B cell (primary cell): ENCODE measurements at regions of chr20 and their contacts with region 1.

Region 1: GRCh38 chr20:32535953-32536823 is 48.9 kb downstream of the NOL4L start:
- DNase-seq: peak; percentile 91
- ATAC-seq: peak; percentile 74
- H3K4me3 ChIP-seq: peak overlapping the region in 4 of 5 experiments; percentile 47 to 69 (median 59)
- H3K4me3 Mint-ChIP-seq: peak overlapping the region; percentile 68
- H3K27ac ChIP-seq: peak overlapping the region; percentile 88 to 92
- H3K27ac Mint-ChIP-seq: peak overlapping the region; percentile 86
- H3K4me1 ChIP-seq: peaks cover 58 to 68% of the 10 kb centered on the region in 2 donors
- H3K4me1 Mint-ChIP-seq: peaks cover 62% of the 10 kb centered on the region
- H3K27me3 ChIP-seq: no peaks in the 10 kb centered on the region
- H3K27me3 Mint-ChIP-seq: no peaks in the 10 kb centered on the region
- CTCF ChIP-seq: no peak

Region 2: DNA sequence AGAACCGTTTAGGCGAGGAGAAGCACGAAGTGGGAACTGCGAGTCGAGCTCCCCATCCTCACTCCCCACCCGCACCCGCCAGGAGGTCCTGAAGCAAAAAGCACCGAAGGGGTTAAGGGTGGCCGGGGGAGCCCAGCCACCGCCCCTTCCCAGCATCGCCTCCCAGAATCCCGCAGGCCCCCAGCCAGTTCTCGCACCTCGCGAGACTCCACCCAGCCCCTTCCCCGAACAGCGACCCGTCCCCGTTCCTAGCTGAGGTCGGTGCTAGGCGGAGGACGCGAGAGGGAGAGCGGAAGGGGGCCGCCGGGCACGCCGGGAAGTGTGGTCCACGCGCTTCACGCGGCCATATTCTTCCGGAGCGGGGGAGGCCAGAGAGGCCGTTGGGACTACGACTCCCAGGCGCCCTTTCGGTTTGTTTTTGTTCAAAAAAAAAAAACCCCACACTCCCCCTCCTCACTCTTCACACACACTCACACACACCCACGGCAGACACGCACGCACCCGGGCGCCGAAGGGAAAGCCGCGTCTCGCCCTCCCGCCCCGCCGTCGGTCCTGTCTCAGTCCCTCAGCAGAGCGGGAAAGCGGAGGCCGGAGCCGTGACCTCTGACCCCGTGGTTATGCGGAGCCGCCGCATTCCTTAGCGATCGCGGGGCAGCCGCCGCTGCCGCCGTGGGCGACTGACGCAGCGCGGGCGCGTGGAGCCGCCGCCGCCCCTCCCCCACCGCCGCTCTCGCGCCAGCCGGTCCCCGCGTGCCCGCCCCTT is 178.1 kb before region 1 on chr20 and contains the start of gene ASXL1:
- CTCF ChIA-PET with region 1: no interaction called
- POLR2A ChIA-PET with region 1: no interaction called
- intact Hi-C with region 1: loop called (anchors 5 kb)
- DNase-seq: peak; percentile 96
- ATAC-seq: peak; percentile 83
- H3K4me3 ChIP-seq: peak within 1 kb of the TSS; percentile 83 to 95 (median 91)
- H3K4me3 Mint-ChIP-seq: peak within 1 kb of the TSS; percentile 95
- H3K27ac ChIP-seq: peak within 1 kb of the TSS; percentile 96 to 97
- H3K27ac Mint-ChIP-seq: peak within 1 kb of the TSS; percentile 98
- H3K4me1 ChIP-seq: peaks cover 47 to 71% of the 10 kb centered on the region in 2 donors
- H3K4me1 Mint-ChIP-seq: peaks cover 71% of the 10 kb centered on the region
- H3K27me3 ChIP-seq: no peaks in the 10 kb centered on the region
- H3K27me3 Mint-ChIP-seq: no peaks in the 10 kb centered on the region
- CTCF ChIP-seq: no peak
- total RNA-seq, gene ASXL1: 180 and 183 TPM in 2 replicates

Region 3: DNA sequence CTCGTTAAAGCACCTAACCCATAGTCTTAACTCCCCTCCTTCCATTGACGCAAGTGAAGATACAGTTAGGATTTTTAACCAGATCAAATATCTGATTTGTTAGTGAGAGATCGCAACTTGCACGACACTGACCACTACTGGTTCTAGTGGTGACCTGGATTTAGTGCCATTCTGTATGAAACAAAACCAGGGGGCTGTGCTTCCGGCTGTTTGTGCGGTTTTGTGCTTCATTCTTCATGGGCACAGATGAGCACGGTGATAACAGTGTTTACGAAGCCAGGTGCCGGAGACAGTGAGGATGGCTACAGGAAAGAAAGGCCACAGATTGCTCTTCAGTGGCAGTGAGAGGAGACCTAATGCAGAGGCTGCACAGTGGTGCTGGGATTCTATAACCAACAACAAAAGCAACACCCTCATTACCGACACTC is 26.5 kb before region 1 on chr20:
- CTCF ChIA-PET with region 1: no interaction called
- POLR2A ChIA-PET with region 1: no interaction called
- intact Hi-C with region 1: no loop called
- DNase-seq: peak; percentile 58
- ATAC-seq: peak; percentile 89
- H3K4me3 ChIP-seq: no peak overlapping the region
- H3K4me3 Mint-ChIP-seq: peak overlapping the region; percentile 76
- H3K27ac ChIP-seq: no peak overlapping the region
- H3K27ac Mint-ChIP-seq: peak overlapping the region; percentile 86
- H3K4me1 ChIP-seq: peaks cover 33 to 34% of the 10 kb centered on the region in 2 donors
- H3K4me1 Mint-ChIP-seq: peaks cover 36% of the 10 kb centered on the region
- H3K27me3 ChIP-seq: no peaks in the 10 kb centered on the region
- H3K27me3 Mint-ChIP-seq: no peaks in the 10 kb centered on the region
- CTCF ChIP-seq: no peak

Region 4: GRCh38 chr20:32577023-32577422 is 40.8 kb after region 1 on chr20:
- CTCF ChIA-PET with region 1: interaction called, 4 read pairs
- POLR2A ChIA-PET with region 1: interaction called, 10 read pairs
- intact Hi-C with region 1: loop called (anchors 5 kb)
- DNase-seq: no peak
- ATAC-seq: no peak
- H3K4me3 ChIP-seq: no peak overlapping the region
- H3K4me3 Mint-ChIP-seq: no peak overlapping the region
- H3K27ac ChIP-seq: no peak overlapping the region
- H3K27ac Mint-ChIP-seq: no peak overlapping the region
- H3K4me1 ChIP-seq: peaks cover 11 to 15% of the 10 kb centered on the region in 2 donors
- H3K4me1 Mint-ChIP-seq: peaks cover 19% of the 10 kb centered on the region
- H3K27me3 ChIP-seq: peaks cover 0 to 9% (median 0%) of the 10 kb centered on the region in 4 experiments
- H3K27me3 Mint-ChIP-seq: peaks cover 2% of the 10 kb centered on the region
- CTCF ChIP-seq: no peak

Region 5: DNA sequence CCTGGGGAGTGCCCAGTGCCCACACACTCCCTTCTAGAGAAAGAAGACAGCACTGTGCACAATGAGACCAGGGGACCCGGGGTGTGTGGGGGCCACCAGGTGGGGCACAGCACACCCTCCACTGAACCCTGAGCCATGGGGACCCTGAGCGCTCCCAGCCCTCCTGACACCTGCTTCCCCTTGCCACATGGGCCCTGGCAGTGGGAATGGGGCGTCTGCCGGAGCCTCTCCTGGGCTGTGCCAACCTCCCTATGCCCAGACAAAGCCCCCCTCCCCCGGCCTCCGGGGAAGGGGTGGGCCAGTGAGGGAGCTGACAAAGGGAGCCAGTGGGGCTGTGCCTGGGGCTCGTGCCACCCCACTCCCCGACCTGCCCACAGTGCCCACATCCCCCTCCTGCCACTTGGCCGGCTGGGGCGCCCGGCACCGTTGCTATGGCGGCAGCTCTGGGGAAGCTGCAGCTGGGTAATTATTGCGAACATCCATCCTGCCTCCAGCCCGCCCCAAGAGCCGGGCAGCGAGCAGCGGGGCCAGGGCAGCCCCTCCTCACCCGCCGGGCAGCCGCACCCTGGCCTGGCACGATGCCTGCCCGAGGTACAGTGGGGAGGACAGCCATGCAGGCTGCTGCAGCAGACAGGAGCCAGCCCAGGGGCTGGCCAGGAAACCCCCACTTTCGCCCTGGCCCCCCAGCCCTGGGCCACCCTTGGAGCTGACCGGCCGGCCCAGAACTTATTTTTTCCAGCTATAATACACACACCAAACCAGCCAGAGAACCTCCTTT is 90.9 kb after region 1 on chr20:
- CTCF ChIA-PET with region 1: no interaction called
- POLR2A ChIA-PET with region 1: interaction called, 3 read pairs
- intact Hi-C with region 1: loop called (anchors 5 kb)
- DNase-seq: peak; percentile 42
- ATAC-seq: peak; percentile 46
- H3K4me3 ChIP-seq: peak overlapping the region in 4 of 5 experiments; percentile 6 to 44 (median 18)
- H3K4me3 Mint-ChIP-seq: peak overlapping the region; percentile 74
- H3K27ac ChIP-seq: peak overlapping the region in 1 of 2 donors; percentile 23
- H3K27ac Mint-ChIP-seq: peak overlapping the region; percentile 32
- H3K4me1 ChIP-seq: peaks cover 19% of the 10 kb centered on the region in 2 donors
- H3K4me1 Mint-ChIP-seq: peaks cover 11% of the 10 kb centered on the region
- H3K27me3 ChIP-seq: peaks cover 0 to 5% (median 2%) of the 10 kb centered on the region in 4 experiments
- H3K27me3 Mint-ChIP-seq: no peaks in the 10 kb centered on the region
- CTCF ChIP-seq: no peak

Region 6: DNA sequence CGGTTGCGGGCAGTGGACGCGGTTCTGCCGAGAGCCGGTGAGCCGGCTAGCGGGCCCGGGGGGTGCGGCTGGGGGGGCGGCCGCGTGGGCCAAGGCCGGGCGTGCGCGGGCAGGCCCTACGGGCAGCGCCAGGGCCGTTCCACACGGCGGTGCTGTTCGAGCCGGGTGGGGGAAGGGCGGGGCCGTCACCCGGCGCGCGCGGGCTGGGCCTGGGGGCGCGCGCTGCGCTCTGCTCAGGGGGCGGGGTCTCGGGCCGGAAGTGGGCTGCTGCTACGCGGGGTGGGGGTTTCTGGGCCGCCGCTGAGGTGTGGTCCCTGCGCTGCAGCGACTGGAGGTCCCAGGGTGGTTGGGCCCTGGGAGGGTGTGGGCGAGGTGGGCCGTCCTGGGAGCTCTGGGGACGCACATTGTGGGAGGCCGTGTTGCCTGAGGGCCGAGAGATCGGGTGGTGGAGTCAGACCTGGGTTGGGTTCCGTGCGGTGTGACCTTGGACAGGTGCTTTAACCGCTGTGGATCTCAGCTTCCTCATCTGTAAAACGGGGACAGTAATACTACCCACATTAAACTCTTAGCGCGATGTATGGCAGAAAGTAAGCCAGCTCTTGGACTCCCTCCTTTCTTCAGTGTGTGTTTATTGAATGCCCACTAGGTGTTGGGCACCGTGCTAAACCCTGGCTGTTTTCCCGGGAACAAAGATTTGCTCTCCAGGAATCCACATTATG is 284.0 kb after region 1 on chr20:
- CTCF ChIA-PET with region 1: no interaction called
- POLR2A ChIA-PET with region 1: no interaction called
- intact Hi-C with region 1: loop called (anchors 5 kb)
- DNase-seq: peak; percentile 93
- ATAC-seq: peak; percentile 72
- H3K4me3 ChIP-seq: peak overlapping the region; percentile 66 to 92 (median 77)
- H3K4me3 Mint-ChIP-seq: peak overlapping the region; percentile 98
- H3K27ac ChIP-seq: peak overlapping the region; percentile 89 to 93
- H3K27ac Mint-ChIP-seq: peak overlapping the region; percentile 98
- H3K4me1 ChIP-seq: peaks cover 21% of the 10 kb centered on the region in 2 donors
- H3K4me1 Mint-ChIP-seq: peaks cover 39% of the 10 kb centered on the region
- H3K27me3 ChIP-seq: no peaks in the 10 kb centered on the region
- H3K27me3 Mint-ChIP-seq: no peaks in the 10 kb centered on the region
- CTCF ChIP-seq: no peak